Breast epithelium (tissue), 4 donors: ENCODE measurements at regions of chr7 and their contacts with region 1.

Region 1: DNA sequence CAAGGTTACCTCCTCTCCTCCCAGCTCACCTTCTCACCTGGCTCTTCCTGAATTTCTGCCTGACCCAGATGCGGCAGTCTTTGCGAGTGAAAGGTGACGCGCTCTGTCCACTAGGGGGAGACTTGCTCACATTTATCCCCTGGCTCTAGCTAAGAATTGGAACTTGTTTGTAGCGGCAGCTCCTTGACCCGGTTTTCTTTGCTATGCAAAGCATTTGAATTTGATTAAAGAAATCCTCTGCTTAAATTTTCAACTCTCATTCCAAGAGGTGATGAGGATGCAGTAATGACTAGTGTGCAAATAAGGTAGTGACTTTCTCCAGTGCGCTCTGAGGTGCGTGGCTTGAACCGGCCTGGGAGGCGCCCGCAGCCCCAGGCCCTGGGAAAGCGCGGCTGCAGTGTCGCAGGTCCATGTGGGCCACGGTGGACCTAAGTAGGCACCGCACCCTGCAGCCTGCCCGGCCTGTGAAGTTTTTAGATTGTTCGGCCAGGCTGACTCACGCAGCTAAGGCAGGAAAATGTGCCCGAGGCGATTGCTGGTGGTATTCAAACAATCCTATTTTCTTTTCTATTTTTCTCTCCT is 336.9 kb upstream of the NPSR1 start:
- DNase-seq: peak; percentile 68 to 70
- H3K4me3 ChIP-seq: peak overlapping the region in 2 of 3 donors; percentile 38 to 45
- H3K27ac ChIP-seq: no peak overlapping the region
- H3K4me1 ChIP-seq: no peaks in the 10 kb centered on the region
- H3K27me3 ChIP-seq: no peaks in the 10 kb centered on the region
- CTCF ChIP-seq: peak; percentile 53 to 75 (median 74)
- POLR2A ChIP-seq: no peak

Region 2: DNA sequence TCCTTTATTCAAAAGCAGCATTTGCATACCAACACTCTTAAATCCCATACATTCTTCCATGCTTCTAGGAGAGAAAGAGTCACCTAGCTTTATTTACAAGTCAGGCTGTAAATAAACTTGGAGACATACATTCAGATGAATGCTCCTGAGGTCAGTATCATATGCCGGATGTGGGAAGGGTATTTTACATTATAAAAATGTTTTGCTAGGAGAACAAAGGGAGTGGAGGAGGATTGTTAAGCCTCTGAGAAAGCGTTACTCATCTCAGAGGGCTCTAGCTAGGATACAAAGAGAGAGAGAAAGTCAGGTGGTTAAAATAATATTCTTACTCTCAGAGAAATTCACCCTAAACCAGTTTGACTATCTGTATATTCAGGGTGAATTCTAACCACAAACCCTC is 36.0 kb after region 1 on chr7:
- intact Hi-C with region 1: loop called (anchors 2 kb)
- DNase-seq: no peak
- H3K4me3 ChIP-seq: no peak overlapping the region
- H3K27ac ChIP-seq: no peak overlapping the region
- H3K4me1 ChIP-seq: no peaks in the 10 kb centered on the region
- H3K27me3 ChIP-seq: no peaks in the 10 kb centered on the region
- CTCF ChIP-seq: no peak
- POLR2A ChIP-seq: no peak